Posterior vena cava (tissue), 2 donors: ENCODE measurements at regions of chr7 and their contacts with region 1.

Region 1: GRCh38 chr7:114085592-114086501 is 167.0 kb upstream of the PPP1R3A start:
- DNase-seq: peak; percentile 93

Region 2: GRCh38 chr7:114130866-114131265 is 45.0 kb after region 1 on chr7:
- intact Hi-C with region 1: no loop called
- DNase-seq: no peak

Region 3: GRCh38 chr7:114148779-114149178 is 62.9 kb after region 1 on chr7:
- intact Hi-C with region 1: no loop called
- DNase-seq: no peak

Region 4: DNA sequence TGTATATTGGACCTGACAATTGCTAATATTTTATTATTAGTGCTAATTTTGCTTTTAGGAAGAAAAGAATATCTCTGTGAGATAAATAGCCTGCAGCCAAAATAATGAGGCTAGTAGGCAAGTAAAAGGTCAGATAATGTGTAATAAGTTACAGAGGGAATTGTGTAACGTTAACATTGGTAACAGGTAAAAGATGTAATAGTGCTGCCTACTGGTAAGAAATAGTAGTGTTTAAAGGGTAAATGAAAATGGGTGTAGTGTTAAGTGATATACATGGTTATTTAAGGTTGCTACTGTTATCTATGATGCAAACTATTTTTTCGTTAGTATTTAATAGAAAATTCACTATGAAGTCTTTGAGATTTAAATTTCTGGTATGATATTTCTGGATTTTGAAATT is 319.6 kb after region 1 on chr7:
- intact Hi-C with region 1: loop called (anchors 10 kb)
- DNase-seq: no peak

Region 5: DNA sequence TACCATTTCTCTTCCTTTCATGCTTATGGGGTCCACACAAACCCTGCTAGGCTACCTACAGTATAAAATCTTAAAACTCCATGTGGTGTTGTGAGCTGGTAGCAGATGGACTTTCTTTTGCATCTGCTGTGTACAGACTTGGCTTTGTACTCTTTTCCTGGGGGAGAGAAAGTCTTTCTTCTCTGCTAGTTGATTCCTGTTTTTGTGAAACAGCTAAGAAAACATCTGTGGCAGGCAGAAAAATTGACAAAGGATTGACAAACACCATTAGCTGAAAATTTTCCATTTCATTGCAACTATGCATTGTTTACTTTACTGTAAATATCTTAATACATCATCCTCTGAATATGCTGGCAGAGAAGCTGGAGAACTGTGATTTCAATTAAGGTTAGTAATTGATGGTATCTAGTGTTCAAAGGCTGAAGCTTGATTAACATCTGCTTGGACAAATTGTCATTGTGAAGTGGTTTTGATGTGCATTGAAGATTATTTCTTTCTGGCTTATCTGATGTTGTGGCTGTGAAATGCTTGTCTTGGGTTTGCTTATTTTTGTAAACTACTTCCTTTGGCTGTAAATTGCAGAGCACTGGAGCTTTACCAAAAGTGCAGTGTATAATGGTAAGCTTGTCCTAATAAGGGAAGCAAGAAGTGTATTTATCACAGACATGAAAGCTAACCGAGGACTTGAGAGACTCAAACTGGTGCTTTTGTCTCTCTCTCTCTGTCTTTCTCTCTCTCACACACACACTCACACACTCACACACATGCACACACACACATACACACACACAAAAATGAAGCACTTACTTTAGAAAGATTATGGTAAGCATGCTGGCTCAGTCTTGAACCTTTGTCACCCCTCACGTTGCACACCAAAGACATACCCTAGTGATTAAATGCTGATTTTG is 328.6 kb after region 1 on chr7 and contains the start of gene FOXP2:
- intact Hi-C with region 1: loop called (anchors 10 kb)
- DNase-seq: no peak
- total RNA-seq, gene FOXP2: 9.9 to 10.0 TPM

Region 6: GRCh38 chr7:114539575-114539974 is 453.7 kb after region 1 on chr7:
- intact Hi-C with region 1: loop called in 1 of 2 experiments (anchors 10 kb)
- DNase-seq: no peak

Region 7: GRCh38 chr7:114653364-114654088 is 567.7 kb after region 1 on chr7:
- intact Hi-C with region 1: loop called in 1 of 2 experiments (anchors 10 kb)
- DNase-seq: no peak